Activated CD8-positive, alpha-beta memory T cell treated with anti-CD3 and anti-CD28 coated beads, Interleukin-2, amount 10 ng/mL, durations not matched to agents 7 days and 5 days (primary cell): ENCODE measurements at regions of chr3 and their contacts with region 1.

Region 1: GRCh38 chr3:4978204-4978965 is 852 bp upstream of the BHLHE40 start:
- DNase-seq: peak; percentile 97
- ATAC-seq: peak; percentile 59
- H3K4me3 Mint-ChIP-seq: peak overlapping the region; percentile 93
- H3K27ac Mint-ChIP-seq: peak overlapping the region; percentile 99
- H3K4me1 Mint-ChIP-seq: peaks cover 40% of the 10 kb centered on the region
- H3K27me3 Mint-ChIP-seq: no peaks in the 10 kb centered on the region

Region 2: DNA sequence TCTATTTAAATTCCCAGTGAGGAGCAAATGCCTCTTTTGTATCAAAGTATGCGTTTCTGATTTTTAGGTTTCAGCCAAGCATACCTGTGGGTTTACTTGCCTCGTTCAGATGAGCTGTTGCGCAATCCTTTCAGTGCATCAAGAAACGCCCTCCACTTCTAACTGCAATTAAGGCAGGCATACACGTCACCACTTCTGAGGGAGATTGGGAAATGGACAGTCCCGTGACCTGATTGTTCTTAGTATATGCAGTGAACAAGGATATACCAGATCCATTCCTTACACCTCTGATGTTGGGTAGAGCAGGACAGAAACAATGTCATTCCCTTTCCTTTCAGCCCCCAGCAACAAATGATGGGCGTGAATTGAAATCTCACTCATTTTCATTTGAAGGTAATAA is 266.2 kb before region 1 on chr3:
- CTCF ChIA-PET with region 1: interaction called, 76 read pairs
- DNase-seq: no peak
- ATAC-seq: no peak
- H3K4me3 Mint-ChIP-seq: no peak overlapping the region
- H3K27ac Mint-ChIP-seq: no peak overlapping the region
- H3K4me1 Mint-ChIP-seq: peaks cover 33% of the 10 kb centered on the region
- H3K27me3 Mint-ChIP-seq: no peaks in the 10 kb centered on the region

Region 3: GRCh38 chr3:4826237-4827100 is 151.9 kb before region 1 on chr3:
- CTCF ChIA-PET with region 1: interaction called, 18 read pairs
- DNase-seq: no peak
- ATAC-seq: no peak
- H3K4me3 Mint-ChIP-seq: peak overlapping the region; percentile 48
- H3K27ac Mint-ChIP-seq: peak overlapping the region; percentile 99
- H3K4me1 Mint-ChIP-seq: peaks cover 96% of the 10 kb centered on the region
- H3K27me3 Mint-ChIP-seq: no peaks in the 10 kb centered on the region

Region 4: DNA sequence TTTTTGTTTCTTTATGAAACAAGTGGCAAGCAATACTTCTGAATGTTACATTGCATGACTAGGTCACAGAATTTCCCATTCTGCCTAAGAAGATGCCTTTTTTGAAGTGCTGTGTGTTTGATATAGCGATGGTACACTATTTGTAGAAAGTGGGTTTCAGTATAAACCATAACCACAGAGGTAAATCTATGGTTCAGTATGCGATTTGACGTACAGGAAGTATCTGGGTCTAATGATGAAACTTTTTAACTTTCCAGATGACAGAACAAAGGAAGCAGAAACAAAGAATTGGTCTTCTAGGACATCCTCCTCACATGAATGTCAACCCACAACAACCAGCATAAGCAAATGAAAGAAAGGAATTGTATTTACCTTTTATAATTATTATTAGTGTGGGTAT is 132.5 kb before region 1 on chr3:
- CTCF ChIA-PET with region 1: interaction called, 47 read pairs
- DNase-seq: no peak
- ATAC-seq: peak; percentile 55
- H3K4me3 Mint-ChIP-seq: peak overlapping the region; percentile 31
- H3K27ac Mint-ChIP-seq: peak overlapping the region; percentile 90
- H3K4me1 Mint-ChIP-seq: peaks cover 96% of the 10 kb centered on the region
- H3K27me3 Mint-ChIP-seq: no peaks in the 10 kb centered on the region

Region 5: DNA sequence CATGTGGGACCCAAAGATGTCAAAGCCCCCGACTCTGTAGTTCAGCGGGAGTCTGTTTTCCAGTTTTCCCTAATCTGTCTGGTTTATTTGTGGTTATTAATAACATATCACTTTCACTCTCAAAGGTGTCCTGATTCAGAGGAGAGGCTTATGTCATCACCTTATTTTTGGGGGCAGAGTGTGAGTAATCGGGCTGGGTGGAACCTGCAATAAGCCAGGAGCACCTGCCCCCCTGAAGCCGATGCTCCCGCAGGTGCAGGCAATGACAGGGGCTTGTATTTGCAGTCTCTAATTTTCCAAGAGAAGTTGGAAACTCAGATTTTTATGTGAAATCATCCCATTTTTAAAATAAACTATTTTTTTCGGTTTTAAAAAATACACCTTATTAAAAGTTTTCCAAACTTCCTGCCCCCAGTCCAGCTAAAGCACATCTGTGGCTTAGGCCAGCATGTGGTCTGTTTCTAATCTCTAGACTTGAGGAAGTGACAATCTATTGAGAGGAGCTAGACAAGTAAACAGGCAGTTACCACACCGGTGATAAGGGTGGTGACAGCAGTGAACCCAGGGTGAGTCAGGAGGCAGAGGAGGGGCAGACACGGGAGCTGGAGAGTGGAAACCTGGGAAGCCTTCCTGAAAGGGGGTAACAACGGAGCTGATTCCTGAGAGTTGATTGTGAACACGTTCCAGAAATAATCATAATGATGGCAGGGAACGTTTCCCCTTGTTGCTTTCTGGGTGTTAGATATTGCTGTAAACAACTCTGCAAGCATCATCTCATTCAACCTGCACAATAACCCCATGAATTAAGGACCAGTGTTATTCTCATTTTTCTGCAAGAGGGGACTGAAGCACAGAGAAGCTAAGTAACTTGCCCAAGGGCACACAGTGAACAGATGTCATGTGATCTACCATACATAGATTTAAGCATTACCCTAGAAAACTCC is 38.1 kb after region 1 on chr3:
- CTCF ChIA-PET with region 1: interaction called, 212 read pairs
- DNase-seq: peak; percentile 83
- ATAC-seq: peak; percentile 70
- H3K4me3 Mint-ChIP-seq: no peak overlapping the region
- H3K27ac Mint-ChIP-seq: peak overlapping the region; percentile 85
- H3K4me1 Mint-ChIP-seq: peaks cover 94% of the 10 kb centered on the region
- H3K27me3 Mint-ChIP-seq: no peaks in the 10 kb centered on the region

Region 6: GRCh38 chr3:5057857-5058324 is 79.5 kb after region 1 on chr3:
- CTCF ChIA-PET with region 1: interaction called, 148 read pairs
- DNase-seq: peak; percentile 91
- ATAC-seq: peak; percentile 94
- H3K4me3 Mint-ChIP-seq: no peak overlapping the region
- H3K27ac Mint-ChIP-seq: peak overlapping the region; percentile 20
- H3K4me1 Mint-ChIP-seq: peaks cover 73% of the 10 kb centered on the region
- H3K27me3 Mint-ChIP-seq: peaks cover 9% of the 10 kb centered on the region